Right ventricle myocardium superior (tissue), 1 donor: ENCODE measurements at regions of chr17 and their contacts with region 1.

Region 1: DNA sequence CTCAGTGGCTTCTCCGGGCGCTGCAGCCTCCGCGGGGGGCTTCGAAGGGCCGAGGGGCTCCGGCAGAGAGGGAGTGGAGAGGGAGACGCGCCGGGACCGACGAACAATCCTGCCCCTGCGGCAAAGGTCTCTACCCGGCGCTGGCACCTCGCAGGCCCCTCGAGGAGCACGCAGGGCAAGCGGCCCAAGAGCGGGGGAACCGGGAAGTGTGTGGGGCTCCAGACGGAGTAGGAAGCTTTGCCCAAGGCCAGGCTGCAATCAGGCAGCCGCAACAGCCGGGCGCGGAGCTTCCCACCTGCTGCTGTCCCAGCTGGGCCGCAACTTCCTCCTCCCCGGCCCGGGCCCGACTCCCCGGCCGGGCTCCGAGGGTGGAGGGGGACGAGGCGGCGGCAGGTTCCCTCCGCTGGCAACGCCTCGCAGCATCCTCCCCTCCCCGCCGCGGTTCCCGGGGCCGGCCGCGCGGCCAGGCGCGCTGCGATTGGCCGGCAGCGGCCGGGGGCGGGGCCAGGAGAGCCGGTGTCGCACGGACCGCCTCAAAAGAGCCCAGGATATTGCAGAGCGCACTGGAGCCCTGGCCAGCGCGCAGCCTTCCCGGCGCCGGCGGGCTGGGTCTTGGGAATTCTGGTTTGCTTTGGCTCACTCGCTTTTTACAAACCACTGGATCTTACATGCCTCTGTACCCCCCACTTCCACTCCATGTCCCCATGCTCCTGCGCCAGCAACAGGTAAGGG is at the start of gene KCNJ2:
- DNase-seq: peak; percentile 93
- ATAC-seq: peak; percentile 92
- total RNA-seq, gene KCNJ2: 47.1 TPM

Region 2: DNA sequence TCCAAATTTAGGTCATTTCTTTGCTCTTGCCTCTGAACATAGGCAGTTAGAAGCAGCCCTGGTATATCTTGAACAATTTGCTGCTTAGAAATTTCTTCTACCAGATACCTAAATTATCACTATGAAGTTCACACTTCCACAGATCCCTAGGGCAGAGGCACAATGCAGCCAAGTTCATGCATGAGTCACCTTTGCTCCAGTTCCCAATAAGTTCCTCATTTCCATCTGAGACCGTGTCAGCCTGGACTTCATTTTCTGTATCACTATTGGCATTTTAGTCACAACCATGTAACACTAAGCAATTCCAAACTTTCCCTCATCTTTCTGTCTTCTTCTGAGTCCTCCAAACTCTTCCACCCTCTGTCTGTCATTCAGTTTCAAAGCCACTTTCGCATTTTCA is 49.2 kb before region 1 on chr17:
- intact Hi-C with region 1: no loop called
- DNase-seq: no peak
- ATAC-seq: no peak

Region 3: GRCh38 chr17:70230850-70231640 is 61.9 kb after region 1 on chr17:
- intact Hi-C with region 1: no loop called
- DNase-seq: no peak
- ATAC-seq: no peak

Region 4: GRCh38 chr17:70298929-70299531 is 129.9 kb after region 1 on chr17:
- intact Hi-C with region 1: loop called (anchors 2 kb)
- DNase-seq: no peak
- ATAC-seq: no peak

Region 5: GRCh38 chr17:70313057-70313852 is 144.1 kb after region 1 on chr17:
- intact Hi-C with region 1: loop called (anchors 5 kb)
- DNase-seq: no peak
- ATAC-seq: no peak

Region 6: GRCh38 chr17:70552230-70552981 is 383.3 kb after region 1 on chr17:
- intact Hi-C with region 1: loop called (anchors 5 kb)
- DNase-seq: no peak
- ATAC-seq: peak; percentile 88

Region 7: GRCh38 chr17:70622368-70623260 is 453.5 kb after region 1 on chr17:
- intact Hi-C with region 1: loop called (anchors 10 kb)
- DNase-seq: peak; percentile 46
- ATAC-seq: peak; percentile 92